A549 (cell line): ENCODE measurements at regions of chr10 and their contacts with region 1.

Region 1: GRCh38 chr10:125936331-125936730 is 40.0 kb downstream of the FANK1 start:
- DNase-seq: no peak
- ATAC-seq: no peak
- H3K4me3 ChIP-seq: no peak overlapping the region
- H3K27ac ChIP-seq: no peak overlapping the region
- H3K4me1 ChIP-seq: peaks cover 6% of the 10 kb centered on the region; the same call in 2 of the 3 replicates
- CTCF ChIP-seq: no peak
- EP300 ChIP-seq: no peak
- POLR2A ChIP-seq: no peak
- RAD21 ChIP-seq: no peak

Region 2: GRCh38 chr10:125868372-125868975 is 67.9 kb before region 1 on chr10:
- CTCF ChIA-PET with region 1: interaction called, 16 read pairs
- POLR2A ChIA-PET with region 1: no interaction called
- DNase-seq: peak; percentile 28 to 74
- ATAC-seq: peak; percentile 73 to 87; a peak in 4 of 6 replicates
- H3K4me3 ChIP-seq: no peak overlapping the region
- H3K27ac ChIP-seq: no peak overlapping the region
- H3K4me1 ChIP-seq: 0 out of 3 replicates have a peak, but pooled peaks cover 4% of the 10 kb centered on the region
- CTCF ChIP-seq: peak; percentile 88
- EP300 ChIP-seq: no peak
- POLR2A ChIP-seq: no peak
- RAD21 ChIP-seq: peak; percentile 89 to 90

Region 3: GRCh38 chr10:125982260-125982948 is 46.1 kb after region 1 on chr10:
- CTCF ChIA-PET with region 1: interaction called, 14 read pairs
- POLR2A ChIA-PET with region 1: no interaction called
- DNase-seq: peak; percentile 35 to 69
- ATAC-seq: peak; percentile 78 to 87; a peak in 5 of 6 replicates
- H3K4me3 ChIP-seq: no peak overlapping the region
- H3K27ac ChIP-seq: peak overlapping the region; percentile 23 to 67; a peak in 4 of 6 replicates
- H3K4me1 ChIP-seq: peaks cover 27% of the 10 kb centered on the region; the same call in 2 of the 3 replicates
- CTCF ChIP-seq: peak; percentile 82
- EP300 ChIP-seq: no peak
- POLR2A ChIP-seq: no peak
- RAD21 ChIP-seq: peak; percentile 87 to 94

Region 4: DNA sequence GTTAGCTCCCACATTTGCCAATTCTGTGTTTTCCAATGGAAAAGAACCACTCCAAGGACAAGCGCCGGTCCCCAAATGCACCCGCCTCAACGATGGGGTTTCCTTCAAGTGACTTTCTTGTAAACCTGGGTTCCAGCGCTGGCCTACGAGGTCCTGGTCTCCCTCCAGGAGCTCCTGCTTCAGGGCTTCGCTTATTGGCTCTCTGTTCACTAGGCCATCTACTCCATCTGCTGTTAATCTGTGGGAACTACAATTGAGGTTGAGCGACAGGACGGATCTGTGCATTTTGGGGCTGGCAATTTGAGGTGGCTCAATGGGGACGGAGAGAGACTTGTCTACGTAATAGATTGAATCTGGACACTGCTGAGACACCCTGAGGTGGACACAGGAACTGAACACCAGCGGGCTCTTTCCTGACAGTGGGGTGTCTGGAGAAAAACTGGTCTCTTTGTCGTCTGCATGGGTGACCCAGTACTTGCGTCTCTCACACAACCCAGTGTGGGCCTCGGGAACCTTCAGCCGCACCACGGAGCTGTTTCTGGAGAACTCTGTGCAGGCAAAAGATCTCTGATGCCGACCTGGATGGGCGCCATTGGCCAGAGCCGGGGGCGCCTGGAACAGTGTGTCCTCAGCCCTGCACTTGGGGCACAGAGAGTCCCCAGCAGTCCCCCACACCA is 567.9 kb after region 1 on chr10:
- CTCF ChIA-PET with region 1: interaction called, 54 read pairs
- POLR2A ChIA-PET with region 1: no interaction called
- DNase-seq: peak; percentile 66 to 74
- ATAC-seq: peak; percentile 88 to 96
- H3K4me3 ChIP-seq: no peak overlapping the region
- H3K27ac ChIP-seq: peak overlapping the region in 1 of 2 experiments; percentile 65; a peak in 3 of 6 replicates
- H3K4me1 ChIP-seq: no peaks in the 10 kb centered on the region; the same call in 2 of the 3 replicates
- CTCF ChIP-seq: peak; percentile 76
- EP300 ChIP-seq: no peak
- POLR2A ChIP-seq: no peak
- RAD21 ChIP-seq: peak; percentile 92 to 93

Region 5: DNA sequence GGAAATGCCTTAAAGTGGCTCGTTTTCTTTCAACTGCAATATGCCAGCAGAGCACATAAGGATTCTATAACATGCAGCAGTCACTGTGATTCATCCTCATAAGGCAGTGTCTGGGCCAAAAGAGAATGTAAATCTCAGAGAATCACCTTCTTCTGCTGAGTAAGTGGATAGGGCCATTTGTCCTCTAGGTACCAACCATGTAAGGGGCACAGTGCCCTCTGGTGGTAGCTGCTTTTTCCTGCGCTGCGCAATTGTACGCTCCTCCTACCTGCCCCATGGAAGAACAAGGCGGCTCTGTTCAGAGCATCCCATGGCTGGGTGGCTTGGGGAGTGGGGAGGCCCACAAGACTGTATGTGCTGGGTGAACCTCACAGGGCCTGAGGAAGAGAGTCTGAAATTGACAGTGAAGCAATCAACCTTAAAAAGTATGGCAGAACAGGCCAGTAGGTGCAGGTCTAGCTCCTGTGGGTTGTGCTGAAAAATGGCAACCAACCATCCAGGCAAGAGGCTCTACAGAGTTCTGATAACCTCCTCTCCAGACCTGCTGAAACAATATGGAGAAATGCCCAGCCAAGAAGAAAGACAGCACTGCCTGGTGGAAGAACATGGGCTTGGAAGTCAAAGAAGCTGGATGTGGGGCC is 812.8 kb after region 1 on chr10:
- CTCF ChIA-PET with region 1: interaction called, 13 read pairs
- POLR2A ChIA-PET with region 1: no interaction called
- DNase-seq: peak; percentile 55 to 84
- ATAC-seq: peak; percentile 99 to 100
- H3K4me3 ChIP-seq: no peak overlapping the region
- H3K27ac ChIP-seq: 0 out of 6 replicates have a peak overlapping the region, but pooled peaks of 1 of the 2 experiments have one; percentile 5
- H3K4me1 ChIP-seq: no peaks in the 10 kb centered on the region
- CTCF ChIP-seq: peak; percentile 81
- EP300 ChIP-seq: no peak
- POLR2A ChIP-seq: no peak
- RAD21 ChIP-seq: peak; percentile 85 to 86

Region 6: GRCh38 chr10:126997801-126998590 is 1061.7 kb after region 1 on chr10:
- CTCF ChIA-PET with region 1: no interaction called
- POLR2A ChIA-PET with region 1: no interaction called
- DNase-seq: no peak
- ATAC-seq: no peak
- H3K4me3 ChIP-seq: no peak overlapping the region
- H3K27ac ChIP-seq: no peak overlapping the region
- H3K4me1 ChIP-seq: no peaks in the 10 kb centered on the region
- CTCF ChIP-seq: no peak
- EP300 ChIP-seq: no peak
- POLR2A ChIP-seq: no peak
- RAD21 ChIP-seq: no peak